Left cardiac atrium (tissue), 4 donors: ENCODE measurements at regions of chr12 and their contacts with region 1.

Region 1: DNA sequence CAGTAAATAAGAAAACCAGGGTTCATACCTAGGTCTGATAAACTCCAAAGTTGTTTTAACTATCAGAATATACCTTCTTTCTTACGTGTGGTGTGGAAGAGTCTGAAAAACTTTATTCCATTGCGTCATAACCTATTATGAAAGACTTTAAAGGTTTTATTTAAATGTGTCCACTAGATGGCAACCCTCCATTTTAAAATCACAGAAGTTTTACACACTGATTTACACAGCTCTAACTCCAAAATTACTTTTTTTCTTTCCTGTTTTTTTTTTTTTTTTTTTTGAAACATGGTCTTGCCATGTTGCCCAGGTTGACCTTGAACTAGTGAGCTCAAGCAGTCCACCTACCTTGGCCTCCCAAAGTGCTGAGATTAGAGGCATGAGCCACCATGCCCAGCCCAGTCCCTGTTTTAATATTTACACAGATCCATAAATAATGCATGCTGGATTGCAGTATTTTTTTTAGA is 17.3 kb upstream of the TMPRSS12 start:
- DNase-seq: no peak
- ATAC-seq: peak; percentile 86 to 87

Region 2: GRCh38 chr12:50725011-50725942 is 100.1 kb before region 1 on chr12:
- intact Hi-C with region 1: no loop called
- DNase-seq: no peak
- ATAC-seq: peak in 1 of 2 donors; percentile 30

Region 3: DNA sequence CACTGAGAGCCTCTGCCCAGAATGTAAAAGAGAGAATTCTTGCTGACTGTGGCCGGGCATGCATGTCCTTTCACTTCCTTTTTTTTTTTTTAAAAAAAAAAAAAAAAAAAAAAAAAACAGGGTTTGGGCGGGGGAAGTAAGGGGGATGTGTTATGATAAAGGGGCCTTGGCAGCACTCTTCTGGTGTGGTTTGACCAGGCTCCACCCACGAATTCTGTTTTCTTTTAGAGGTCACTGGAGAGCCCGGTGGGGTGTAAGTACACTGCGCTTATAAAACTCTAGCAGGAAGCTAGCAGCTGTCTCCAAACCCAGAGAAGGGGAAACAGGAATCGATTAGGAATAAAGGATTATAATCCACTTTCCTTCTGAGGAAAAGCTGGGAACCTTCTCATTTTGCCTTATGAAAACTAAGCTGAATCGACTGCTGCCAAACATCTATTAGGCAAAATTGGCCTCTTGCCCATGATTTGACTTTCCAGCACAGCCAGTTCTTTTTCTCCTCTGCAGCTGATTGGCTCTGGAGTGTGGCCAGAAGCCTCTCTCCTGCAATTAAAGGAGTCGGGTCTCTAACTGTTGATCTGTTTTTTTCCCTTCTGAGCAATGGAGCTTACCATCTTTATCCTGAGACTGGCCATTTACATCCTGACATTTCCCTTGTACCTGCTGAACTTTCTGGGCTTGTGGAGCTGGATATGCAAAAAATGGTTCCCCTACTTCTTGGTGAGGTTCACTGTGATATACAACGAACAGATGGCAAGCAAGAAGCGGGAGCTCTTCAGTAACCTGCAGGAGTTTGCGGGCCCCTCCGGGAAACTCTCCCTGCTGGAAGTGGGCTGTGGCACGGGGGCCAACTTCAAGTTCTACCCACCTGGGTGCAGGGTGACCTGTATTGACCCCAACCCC is 99.3 kb after region 1 on chr12:
- intact Hi-C with region 1: loop called (anchors 5 to 10 kb)
- DNase-seq: peak; percentile 93
- ATAC-seq: peak; percentile 95 to 97

Region 4: GRCh38 chr12:50986966-50987737 is 161.7 kb after region 1 on chr12:
- intact Hi-C with region 1: loop called (anchors 2 to 5 kb)
- DNase-seq: no peak
- ATAC-seq: peak; percentile 65 to 76

Region 5: GRCh38 chr12:51132693-51133092 is 307.3 kb after region 1 on chr12:
- intact Hi-C with region 1: no loop called
- DNase-seq: no peak
- ATAC-seq: no peak